ENCODE measurements at regions of chr19 and their contacts with region 1.

Region 1: DNA sequence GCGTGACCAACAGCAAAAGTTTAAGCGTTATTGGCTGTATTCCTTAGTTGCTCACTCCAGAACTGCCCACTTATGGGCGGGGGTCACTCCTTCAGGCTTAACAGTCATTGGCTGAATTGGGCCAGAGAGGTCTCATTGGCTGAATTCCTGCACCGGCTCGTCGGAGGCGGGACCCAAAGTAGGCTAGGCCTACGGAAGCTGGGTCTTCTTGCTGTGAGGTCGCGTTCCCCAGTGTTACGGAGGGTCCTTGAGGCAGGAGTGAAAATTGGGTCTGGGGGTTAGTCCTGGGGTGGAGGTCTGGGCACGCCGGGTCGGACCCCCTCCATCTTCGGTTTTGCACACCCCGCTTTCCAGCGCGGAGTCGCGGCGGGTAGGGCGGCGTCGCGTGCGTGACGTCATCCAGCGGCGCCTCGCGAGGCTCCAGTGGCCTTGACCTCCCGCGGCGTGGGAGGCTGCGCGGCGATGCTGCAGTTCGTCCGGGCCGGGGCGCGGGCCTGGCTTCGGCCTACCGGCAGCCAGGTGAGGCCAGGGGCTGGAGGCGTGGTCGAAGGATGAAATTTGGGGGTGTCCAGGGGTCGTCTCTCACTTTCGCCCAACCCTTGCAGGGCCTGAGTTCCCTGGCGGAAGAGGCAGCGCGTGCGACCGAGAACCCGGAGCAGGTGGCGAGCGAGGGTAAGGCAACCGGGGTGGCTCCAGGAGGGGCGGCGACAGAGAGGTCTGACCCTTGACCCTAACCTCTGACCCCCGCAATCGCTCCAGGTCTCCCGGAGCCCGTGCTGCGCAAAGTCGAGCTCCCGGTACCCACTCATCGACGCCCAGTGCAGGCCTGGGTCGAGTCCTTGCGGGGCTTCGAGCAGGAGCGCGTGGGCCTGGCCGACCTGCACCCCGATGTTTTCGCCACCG is at the start of gene MRPL4:
- H3K4me3 Mint-ChIP-seq: peak within 1 kb of the TSS; percentile 90
- H3K27ac Mint-ChIP-seq: peak within 1 kb of the TSS; percentile 98
- H3K4me1 Mint-ChIP-seq: peaks cover 40% of the 10 kb centered on the region
- H3K27me3 Mint-ChIP-seq: no peaks in the 10 kb centered on the region

Region 2: DNA sequence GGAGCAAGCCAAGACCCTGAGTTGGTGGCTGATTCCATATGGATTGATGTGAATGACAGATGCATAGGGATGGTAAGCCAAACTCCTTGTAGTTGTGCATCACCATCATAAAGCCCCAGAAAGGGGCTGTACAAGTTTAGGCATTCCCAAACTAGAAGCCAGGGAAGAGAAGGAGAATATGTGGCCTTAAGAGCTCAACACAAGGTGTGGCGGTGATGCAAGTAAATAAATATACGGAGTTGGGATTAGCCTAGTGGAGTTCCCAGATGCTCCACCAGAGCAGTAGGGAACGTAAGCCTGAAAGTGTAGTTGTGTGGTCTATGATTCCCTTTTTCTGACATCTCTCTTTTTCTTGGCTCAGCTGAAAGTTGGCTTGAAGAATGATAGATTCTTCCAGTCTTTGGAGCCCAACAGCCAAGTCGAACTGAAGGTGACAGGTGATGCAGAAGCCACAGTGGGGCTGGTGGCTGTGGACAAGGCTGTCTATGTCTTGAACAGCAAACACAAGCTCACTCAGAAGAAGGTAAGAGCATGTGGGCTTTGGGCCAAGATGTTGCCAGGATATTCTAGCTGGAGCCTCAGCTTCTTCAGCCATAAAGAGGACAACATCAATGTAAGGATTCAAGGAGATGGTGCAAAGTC is 208.6 kb before region 1 on chr19:
- intact Hi-C with region 1: no loop called
- H3K4me3 Mint-ChIP-seq: no peak overlapping the region
- H3K27ac Mint-ChIP-seq: no peak overlapping the region
- H3K4me1 Mint-ChIP-seq: peaks cover 3% of the 10 kb centered on the region
- H3K27me3 Mint-ChIP-seq: peaks cover 5% of the 10 kb centered on the region

Region 3: GRCh38 chr19:10095948-10096621 is 156.0 kb before region 1 on chr19:
- intact Hi-C with region 1: loop called (anchors 2 kb)
- H3K4me3 Mint-ChIP-seq: peak overlapping the region; percentile 75
- H3K27ac Mint-ChIP-seq: peak overlapping the region; percentile 86
- H3K4me1 Mint-ChIP-seq: peaks cover 41% of the 10 kb centered on the region
- H3K27me3 Mint-ChIP-seq: peaks cover 2% of the 10 kb centered on the region

Region 4: GRCh38 chr19:10230861-10231611 is 21.0 kb before region 1 on chr19 and contains the start of gene S1PR2:
- intact Hi-C with region 1: loop called (anchors 2 kb)
- H3K4me3 Mint-ChIP-seq: peak within 1 kb of the TSS; percentile 92
- H3K27ac Mint-ChIP-seq: peak within 1 kb of the TSS; percentile 91
- H3K4me1 Mint-ChIP-seq: peaks cover 37% of the 10 kb centered on the region
- H3K27me3 Mint-ChIP-seq: peaks cover 6% of the 10 kb centered on the region

Measured in dendritic cell treated with granulocyte-macrophage colony-stimulating factor and Interleukin-4, amounts not matched to agents 40 ng/mL and 50 ng/mL, for 4 days (primary cell).